ENCODE measurements at regions of chrX and their contacts with region 1.

Region 1: DNA sequence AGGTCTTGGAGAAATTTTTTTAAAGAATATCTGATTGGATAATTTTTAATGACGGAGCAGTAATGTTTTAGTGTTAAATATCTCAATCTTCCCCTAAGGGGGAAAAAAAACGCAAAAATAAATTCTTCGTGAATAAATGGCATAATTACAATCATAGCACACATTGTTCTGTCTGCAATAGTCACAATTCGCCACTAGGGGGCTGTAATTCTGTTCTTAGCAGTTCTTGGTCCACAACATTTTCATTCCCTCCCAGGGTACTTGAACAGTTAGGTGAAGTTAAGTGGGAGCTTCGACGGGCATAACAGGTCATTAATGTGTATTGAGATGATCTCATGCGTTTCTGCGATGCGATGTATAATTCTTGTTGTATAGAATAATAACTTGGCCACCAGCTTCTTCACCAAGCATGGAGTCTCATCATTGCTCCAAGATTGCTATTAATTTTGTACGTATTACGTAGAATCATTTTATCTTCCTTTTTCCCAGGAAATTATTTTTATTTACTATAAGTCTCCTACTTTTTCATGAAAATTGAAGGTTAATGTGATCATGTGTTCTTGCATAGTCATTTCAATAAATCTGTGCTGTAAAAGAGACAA is 27.2 kb downstream of the HTR2C start:
- DNase-seq: peak; percentile 42
- H3K4me3 ChIP-seq: no peak overlapping the region
- H3K27ac ChIP-seq: no peak overlapping the region
- H3K4me1 ChIP-seq: no peaks in the 10 kb centered on the region
- H3K27me3 ChIP-seq: no peaks in the 10 kb centered on the region

Region 2: DNA sequence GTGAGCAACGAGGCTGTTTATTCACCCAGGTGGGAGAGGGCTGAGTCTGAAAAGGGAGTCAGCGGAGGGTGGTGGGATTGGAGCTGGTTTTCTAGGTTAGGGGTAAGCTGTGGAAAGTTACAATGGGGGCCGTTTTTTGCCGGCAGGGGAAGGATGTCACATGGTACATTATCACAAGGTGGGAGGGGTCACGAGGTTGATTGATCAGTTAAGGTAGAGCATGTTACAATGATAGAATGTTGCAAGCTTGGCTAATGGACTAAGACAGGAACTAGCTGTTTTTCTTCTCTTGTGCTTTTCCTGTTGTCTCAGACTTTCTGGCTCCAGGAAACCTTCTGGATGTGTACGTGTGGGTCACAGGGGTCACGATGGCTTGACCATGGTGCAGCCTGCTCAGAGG is 563.6 kb before region 1 on chrX:
- in situ Hi-C with region 1: no loop called
- DNase-seq: no peak
- H3K4me3 ChIP-seq: no peak overlapping the region
- H3K27ac ChIP-seq: no peak overlapping the region
- H3K4me1 ChIP-seq: no peaks in the 10 kb centered on the region
- H3K27me3 ChIP-seq: no peaks in the 10 kb centered on the region

Region 3: DNA sequence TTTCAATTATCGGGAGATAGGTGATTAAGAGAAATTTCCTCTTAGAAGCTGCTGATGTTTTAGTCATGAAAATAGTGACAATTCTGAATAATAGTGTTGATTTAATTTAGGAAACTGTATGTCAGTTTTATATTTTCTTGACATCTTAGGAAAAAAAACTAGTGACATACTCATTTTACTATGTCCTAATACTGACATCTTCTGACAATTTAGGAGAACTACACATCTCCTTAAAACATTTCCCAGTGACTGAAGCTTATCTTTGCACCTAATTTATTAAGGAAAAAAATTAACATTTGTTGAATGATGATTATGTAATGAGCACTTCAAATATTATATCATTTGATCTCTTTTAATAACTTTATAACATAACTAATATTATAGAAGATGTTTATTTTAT is 536.1 kb after region 1 on chrX:
- in situ Hi-C with region 1: loop called (anchors 10 kb)
- DNase-seq: peak; percentile 35
- H3K4me3 ChIP-seq: no peak overlapping the region
- H3K27ac ChIP-seq: no peak overlapping the region
- H3K4me1 ChIP-seq: no peaks in the 10 kb centered on the region
- H3K27me3 ChIP-seq: no peaks in the 10 kb centered on the region

Measured in GM23248 (cell line).